Right ventricle myocardium superior (tissue), 1 donor: ENCODE measurements at regions of chr9 and their contacts with region 1.

Region 1: GRCh38 chr9:89323390-89323789 is 5.1 kb downstream of the SECISBP2 start:
- DNase-seq: no peak
- ATAC-seq: no peak

Region 2: DNA sequence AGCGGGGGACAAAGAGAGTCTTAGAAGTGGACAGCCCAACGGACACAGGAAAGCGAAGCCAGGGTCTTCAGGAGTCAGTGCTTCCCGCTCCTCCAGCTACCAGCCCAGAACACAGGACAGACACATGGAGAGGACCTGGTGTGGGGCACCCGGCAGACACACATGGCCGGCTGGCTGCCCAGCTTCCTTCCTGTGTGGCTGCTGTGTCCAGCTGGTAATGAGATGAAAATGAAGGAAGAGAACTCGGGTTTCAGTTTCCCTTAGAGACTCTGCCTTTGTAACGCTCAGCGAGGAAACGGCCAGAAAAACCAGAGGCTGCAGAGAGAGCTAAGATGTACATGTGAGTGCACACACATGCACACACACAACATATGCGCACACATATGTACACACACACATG is 82.4 kb after region 1 on chr9:
- intact Hi-C with region 1: no loop called
- DNase-seq: peak; percentile 73
- ATAC-seq: peak; percentile 58

Region 3: DNA sequence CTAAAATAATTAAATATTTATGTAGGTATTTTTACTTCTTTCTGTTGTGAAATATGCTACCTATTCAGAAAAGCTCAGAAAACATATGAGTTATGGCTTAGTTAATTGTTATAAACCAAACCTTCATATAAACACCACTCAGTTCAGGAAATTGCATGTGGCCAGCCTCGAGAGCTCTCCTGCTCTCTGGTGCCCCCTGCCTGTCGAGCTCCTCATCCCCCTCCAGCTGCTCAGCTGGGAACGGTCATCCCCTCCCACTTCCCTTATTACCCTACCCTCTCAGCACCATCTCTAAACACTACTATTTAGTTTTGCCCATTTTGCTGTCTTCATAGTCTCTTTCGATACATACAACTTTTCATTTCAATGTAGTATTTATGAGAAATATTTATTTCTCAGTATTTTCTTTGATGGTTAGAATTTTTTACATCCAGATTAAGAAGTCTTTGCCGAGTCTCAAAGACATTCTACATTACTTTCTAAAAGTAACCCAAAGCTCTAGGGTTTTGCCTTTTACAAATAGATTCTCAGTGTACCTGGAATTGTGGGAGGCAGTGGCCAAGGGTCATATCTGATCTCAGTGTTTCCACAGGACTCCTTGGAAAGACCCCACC is 225.7 kb after region 1 on chr9:
- intact Hi-C with region 1: loop called (anchors 5 kb)
- DNase-seq: peak; percentile 89
- ATAC-seq: peak; percentile 97